Heart left ventricle (tissue), 16 donors: ENCODE measurements at regions of chr5 and their contacts with region 1.

Region 1: GRCh38 chr5:137660349-137660817 is 75.5 kb downstream of the KLHL3 start:
- DNase-seq: peak in 4 of 5 donors; percentile 60 to 70 (median 68)
- ATAC-seq: peak; percentile 69 to 91 (median 85)
- H3K4me3 ChIP-seq: no peak overlapping the region
- H3K27ac ChIP-seq: no peak overlapping the region
- H3K4me1 ChIP-seq: peaks cover 0 to 11% (median 5%) of the 10 kb centered on the region in 12 donors
- H3K27me3 ChIP-seq: no peaks in the 10 kb centered on the region
- CTCF ChIP-seq: peak; percentile 66 to 89 (median 78)
- POLR2A ChIP-seq: no peak

Region 2: GRCh38 chr5:137735555-137736284 is 75.3 kb after region 1 on chr5 and contains the start of gene KLHL3:
- intact Hi-C with region 1: loop called in 4 of 10 experiments (anchors 2 kb)
- DNase-seq: peak in 4 of 5 donors; percentile 40 to 48 (median 45)
- ATAC-seq: peak; percentile 49 to 80 (median 76)
- H3K4me3 ChIP-seq: peak within 1 kb of the TSS; percentile 25 to 66 (median 54)
- H3K27ac ChIP-seq: peak within 1 kb of the TSS; percentile 55 to 90 (median 72)
- H3K4me1 ChIP-seq: peaks cover 5 to 71% (median 43%) of the 10 kb centered on the region in 12 donors
- H3K27me3 ChIP-seq: no peaks in the 10 kb centered on the region
- CTCF ChIP-seq: peak in 7 of 12 donors; percentile 21 to 46 (median 27)
- POLR2A ChIP-seq: no peak
- total RNA-seq, gene KLHL3: 16.9 to 77.6 (median 26.1) TPM

Region 3: GRCh38 chr5:137743031-137743640 is 82.8 kb after region 1 on chr5:
- intact Hi-C with region 1: loop called in 9 of 10 experiments (anchors 2 kb)
- DNase-seq: peak in 4 of 5 donors; percentile 33 to 63 (median 49)
- ATAC-seq: peak; percentile 61 to 82 (median 71)
- H3K4me3 ChIP-seq: no peak overlapping the region
- H3K27ac ChIP-seq: no peak overlapping the region
- H3K4me1 ChIP-seq: peaks cover 0 to 22% (median 6%) of the 10 kb centered on the region in 12 donors
- H3K27me3 ChIP-seq: no peaks in the 10 kb centered on the region
- CTCF ChIP-seq: peak; percentile 47 to 75 (median 66)
- POLR2A ChIP-seq: no peak